Activated CD4-positive, alpha-beta T cell treated with anti-CD3 and anti-CD28 coated beads, Interleukin-2, amount 10 ng/mL, durations not matched to agents 7 days and 5 days (primary cell): ENCODE measurements at regions of chr11 and their contacts with region 1.

Region 1: DNA sequence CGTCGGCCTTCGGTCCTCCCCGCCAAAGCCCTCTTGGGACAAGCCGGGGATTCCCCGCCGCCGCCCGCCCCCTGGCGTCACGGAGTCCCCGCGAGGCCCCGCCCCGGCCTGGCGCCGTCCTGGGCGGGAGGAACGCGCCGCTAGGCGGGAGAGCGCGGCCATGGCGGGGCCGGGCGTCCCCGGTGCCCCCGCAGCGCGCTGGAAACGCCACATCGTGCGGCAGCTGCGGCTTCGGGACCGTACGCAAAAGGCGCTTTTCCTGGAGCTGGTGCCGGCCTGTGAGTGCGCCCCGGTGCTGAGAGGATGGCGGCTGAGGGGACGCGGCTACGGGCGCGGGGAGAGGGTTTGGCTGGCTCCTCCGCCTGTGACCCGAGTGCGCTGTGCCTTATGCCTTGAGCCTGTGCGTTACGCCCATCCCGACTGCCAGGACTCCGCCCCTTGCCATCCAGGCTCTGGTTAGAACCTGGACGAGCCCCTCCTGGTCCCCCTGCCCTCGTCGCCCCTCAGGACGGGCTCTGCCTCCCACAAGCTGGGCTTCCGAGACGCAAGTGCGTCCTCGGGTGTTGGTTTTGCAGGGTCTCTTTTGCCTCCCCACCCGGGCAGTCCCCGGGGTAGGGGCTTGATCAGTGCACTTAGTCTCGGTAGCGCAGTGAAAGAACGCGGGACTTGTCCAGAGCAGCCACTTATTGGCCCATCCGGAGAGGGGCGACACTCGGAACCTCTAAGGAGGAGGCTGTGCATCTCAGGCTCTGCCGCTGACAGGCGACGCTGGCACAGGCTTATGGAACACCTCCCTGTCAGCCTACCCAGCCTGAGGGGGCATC is at the start of gene ATG16L2:
- DNase-seq: peak; percentile 88
- H3K4me3 Mint-ChIP-seq: peak within 1 kb of the TSS; percentile 100
- H3K27ac Mint-ChIP-seq: peak within 1 kb of the TSS; percentile 99
- H3K4me1 Mint-ChIP-seq: peaks cover 52% of the 10 kb centered on the region
- H3K27me3 Mint-ChIP-seq: no peaks in the 10 kb centered on the region
- total RNA-seq, gene ATG16L2: 108 to 113 TPM

Region 2: GRCh38 chr11:72831513-72832300 is 17.2 kb after region 1 on chr11:
- CTCF ChIA-PET with region 1: interaction called, 11 read pairs
- POLR2A ChIA-PET with region 1: interaction called, 3 read pairs
- DNase-seq: peak; percentile 59
- H3K4me3 Mint-ChIP-seq: no peak overlapping the region
- H3K27ac Mint-ChIP-seq: no peak overlapping the region
- H3K4me1 Mint-ChIP-seq: peaks cover 38% of the 10 kb centered on the region
- H3K27me3 Mint-ChIP-seq: no peaks in the 10 kb centered on the region

Region 3: GRCh38 chr11:72842126-72842525 is 27.6 kb after region 1 on chr11:
- CTCF ChIA-PET with region 1: no interaction called
- POLR2A ChIA-PET with region 1: no interaction called
- DNase-seq: no peak
- H3K4me3 Mint-ChIP-seq: no peak overlapping the region
- H3K27ac Mint-ChIP-seq: no peak overlapping the region
- H3K4me1 Mint-ChIP-seq: peaks cover 11% of the 10 kb centered on the region
- H3K27me3 Mint-ChIP-seq: no peaks in the 10 kb centered on the region

Region 4: DNA sequence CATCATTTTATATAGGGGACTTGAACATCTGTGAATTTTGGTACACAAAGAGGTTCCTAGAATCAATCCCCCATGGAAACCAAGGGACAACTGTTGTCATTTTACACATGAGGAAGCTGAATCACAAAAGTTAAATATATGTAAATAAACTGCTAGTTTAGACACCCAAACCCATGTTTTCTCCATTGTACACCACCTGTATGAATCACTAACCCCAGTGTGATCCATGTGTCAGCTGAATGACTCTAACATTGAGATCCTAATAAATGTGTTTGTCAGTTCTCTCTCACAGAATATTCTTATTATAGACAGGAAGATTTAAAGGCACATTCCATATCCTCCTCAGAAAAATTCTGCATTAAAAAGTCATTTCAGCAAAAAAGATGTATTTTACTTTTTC is 83.0 kb after region 1 on chr11:
- CTCF ChIA-PET with region 1: no interaction called
- POLR2A ChIA-PET with region 1: no interaction called
- DNase-seq: no peak
- H3K4me3 Mint-ChIP-seq: no peak overlapping the region
- H3K27ac Mint-ChIP-seq: no peak overlapping the region
- H3K4me1 Mint-ChIP-seq: no peaks in the 10 kb centered on the region
- H3K27me3 Mint-ChIP-seq: no peaks in the 10 kb centered on the region